Adrenal gland (tissue), 19 donors: ENCODE measurements at regions of chr2 and their contacts with region 1.

Region 1: GRCh38 chr2:66601624-66602023 is 166.7 kb downstream of the MEIS1 start:
- DNase-seq: no peak
- H3K4me3 ChIP-seq: no peak overlapping the region
- H3K27ac ChIP-seq: no peak overlapping the region
- H3K4me1 ChIP-seq: peaks cover under 1 to 2% of the 10 kb centered on the region in 2 donors
- H3K27me3 ChIP-seq: no peaks in the 10 kb centered on the region
- CTCF ChIP-seq: no peak
- POLR2A ChIP-seq: no peak

Region 2: GRCh38 chr2:66665124-66665984 is 63.7 kb after region 1 on chr2:
- intact Hi-C with region 1: loop called in 1 of 2 experiments (anchors 10 kb)
- DNase-seq: no peak
- H3K4me3 ChIP-seq: no peak overlapping the region
- H3K27ac ChIP-seq: no peak overlapping the region
- H3K4me1 ChIP-seq: no peaks in the 10 kb centered on the region
- H3K27me3 ChIP-seq: no peaks in the 10 kb centered on the region
- CTCF ChIP-seq: no peak
- POLR2A ChIP-seq: no peak

Region 3: DNA sequence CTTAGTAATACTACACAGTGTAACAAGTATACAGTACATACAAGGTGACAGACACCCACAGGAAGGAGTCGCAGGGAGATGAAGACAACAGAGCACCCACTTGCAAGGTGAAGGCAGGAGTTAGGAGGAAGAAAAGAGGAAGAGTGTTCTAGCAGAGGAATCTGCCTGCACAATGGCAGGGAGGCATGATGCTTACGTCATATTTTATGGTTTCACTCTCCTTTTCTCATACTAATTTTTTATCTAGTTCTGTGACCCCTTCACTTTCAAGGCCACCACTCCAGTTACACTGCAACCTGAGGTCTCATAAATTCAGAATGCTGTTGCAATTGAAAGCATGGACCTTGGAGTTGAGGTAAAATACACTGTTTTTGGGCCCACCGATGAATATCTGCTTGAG is 165.0 kb after region 1 on chr2:
- intact Hi-C with region 1: no loop called
- DNase-seq: no peak
- H3K4me3 ChIP-seq: no peak overlapping the region
- H3K27ac ChIP-seq: no peak overlapping the region
- H3K4me1 ChIP-seq: no peaks in the 10 kb centered on the region
- H3K27me3 ChIP-seq: no peaks in the 10 kb centered on the region
- CTCF ChIP-seq: no peak
- POLR2A ChIP-seq: no peak